CD4-positive, alpha-beta T cell (primary cell): ENCODE measurements at regions of chr4 and their contacts with region 1.

Region 1: DNA sequence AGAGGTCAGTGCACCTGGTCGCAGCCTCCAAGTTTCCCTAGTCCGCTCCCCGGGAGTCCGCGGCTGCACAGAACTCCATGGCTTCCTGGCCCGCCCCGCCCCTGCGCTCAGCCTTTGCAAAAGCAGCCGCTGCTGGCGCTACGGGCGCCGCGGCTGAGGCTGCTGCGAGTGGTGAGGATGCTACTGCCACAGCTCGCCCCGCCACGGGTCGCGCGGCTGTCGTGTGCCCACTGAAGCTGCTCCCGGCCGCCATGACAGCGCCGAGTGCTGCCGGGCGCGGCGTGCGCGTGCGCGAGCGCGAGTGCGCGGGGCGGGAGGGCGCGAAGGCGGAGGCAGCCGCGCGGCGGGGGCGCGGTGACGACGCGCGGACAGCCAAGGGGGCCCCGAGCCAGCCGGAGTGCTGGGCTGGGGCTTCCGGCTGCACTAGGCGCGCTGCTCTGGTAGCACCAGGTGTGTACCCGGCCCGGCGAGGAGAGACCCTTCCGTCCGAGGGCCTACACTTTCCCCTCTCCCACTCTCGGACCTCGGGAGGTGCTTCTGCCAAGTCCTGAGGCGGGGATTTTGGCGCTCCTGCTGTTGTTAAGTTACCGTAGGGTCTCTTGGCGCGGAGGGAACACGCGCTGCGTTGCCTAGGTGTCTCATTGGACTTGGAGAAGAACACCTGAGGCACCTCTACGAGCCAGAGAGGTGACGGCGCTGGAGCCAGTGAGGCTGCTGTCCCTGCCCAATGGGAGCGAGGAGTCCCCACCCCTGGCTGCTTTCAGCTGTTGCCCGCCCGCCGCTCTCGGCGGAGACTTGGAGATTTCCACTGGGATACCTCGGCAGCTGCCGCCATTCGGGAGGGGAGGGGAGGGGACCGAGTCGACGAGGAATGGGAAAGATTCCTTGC is 619 bp upstream of the LRBA start:
- DNase-seq: peak; percentile 65 to 95 (median 78)
- ATAC-seq: peak; percentile 72
- H3K4me3 ChIP-seq: peak overlapping the region; percentile 83
- H3K4me3 Mint-ChIP-seq: peak overlapping the region; percentile 100
- H3K27ac ChIP-seq: peak overlapping the region; percentile 91 to 97
- H3K27ac Mint-ChIP-seq: peak overlapping the region; percentile 98
- H3K4me1 ChIP-seq: peaks cover 28% of the 10 kb centered on the region
- H3K4me1 Mint-ChIP-seq: peaks cover 40% of the 10 kb centered on the region
- H3K27me3 ChIP-seq: no peaks in the 10 kb centered on the region
- H3K27me3 Mint-ChIP-seq: no peaks in the 10 kb centered on the region
- CTCF ChIP-seq: no peak

Region 2: GRCh38 chr4:151099229-151099975 is 83.7 kb after region 1 on chr4 and contains the start of gene RPS3A:
- CTCF ChIA-PET with region 1: interaction called, 13 read pairs
- POLR2A ChIA-PET with region 1: interaction called, 78 read pairs
- intact Hi-C with region 1: loop called (anchors 1 kb)
- DNase-seq: peak; percentile 96 to 99 (median 98)
- ATAC-seq: peak; percentile 83
- H3K4me3 ChIP-seq: peak within 1 kb of the TSS; percentile 74
- H3K4me3 Mint-ChIP-seq: peak within 1 kb of the TSS; percentile 87
- H3K27ac ChIP-seq: peak within 1 kb of the TSS; percentile 82 to 97
- H3K27ac Mint-ChIP-seq: peak within 1 kb of the TSS; percentile 88
- H3K4me1 ChIP-seq: peaks cover 26% of the 10 kb centered on the region
- H3K4me1 Mint-ChIP-seq: peaks cover 36% of the 10 kb centered on the region
- H3K27me3 ChIP-seq: no peaks in the 10 kb centered on the region
- H3K27me3 Mint-ChIP-seq: no peaks in the 10 kb centered on the region
- CTCF ChIP-seq: peak; percentile 91
- total RNA-seq, gene RPS3A: 3,925 to 4,071 TPM

Region 3: DNA sequence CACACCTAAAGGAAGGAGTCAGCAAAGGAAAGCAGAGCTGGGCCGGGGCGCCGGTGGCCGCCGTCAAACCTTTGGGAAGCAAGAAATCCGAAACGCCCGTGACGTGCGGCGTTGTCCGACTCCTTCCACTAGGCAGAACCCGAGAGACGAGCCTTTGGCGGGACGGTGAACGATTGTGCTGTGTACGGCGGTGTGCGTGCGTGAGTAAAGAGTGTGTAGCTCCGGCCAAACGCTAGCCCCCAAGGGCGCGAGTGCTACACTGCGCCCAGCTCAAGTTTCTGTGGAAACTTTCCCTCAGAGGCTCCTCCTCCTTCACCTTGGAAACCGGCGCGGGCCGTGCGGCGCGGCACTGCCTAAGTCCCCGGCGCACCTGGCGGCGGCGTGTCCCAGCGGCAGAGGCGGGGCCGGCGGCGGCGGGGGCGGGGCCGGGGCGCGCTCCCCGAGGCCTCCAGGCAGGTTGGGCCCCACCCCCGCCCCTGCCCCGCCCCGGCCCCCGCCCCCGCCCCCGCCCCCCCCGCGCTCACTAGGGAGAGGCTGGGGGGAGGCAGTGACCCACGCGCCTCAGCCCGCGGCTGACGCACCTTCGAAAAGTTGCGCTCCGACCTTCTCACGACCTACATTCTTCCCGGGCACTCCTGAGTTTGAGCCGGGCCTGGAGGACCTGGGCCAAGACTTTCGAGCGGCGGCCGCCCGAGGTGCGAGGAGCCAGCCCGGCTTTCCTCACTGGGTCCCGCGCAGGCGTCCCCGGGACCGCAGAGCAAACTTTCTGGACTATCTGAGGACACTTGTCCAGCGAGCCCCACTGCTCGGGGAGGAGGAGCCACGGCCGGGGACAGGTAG is 393.1 kb after region 1 on chr4 and contains the start of gene FHIP1A:
- CTCF ChIA-PET with region 1: no interaction called
- POLR2A ChIA-PET with region 1: no interaction called
- intact Hi-C with region 1: loop called in 1 of 2 experiments (anchors 5 kb)
- DNase-seq: peak; percentile 73 to 93 (median 85)
- ATAC-seq: peak; percentile 93
- H3K4me3 ChIP-seq: peak within 1 kb of the TSS; percentile 68
- H3K4me3 Mint-ChIP-seq: peak within 1 kb of the TSS; percentile 96
- H3K27ac ChIP-seq: no peak within 1 kb of the TSS
- H3K27ac Mint-ChIP-seq: peak within 1 kb of the TSS; percentile 83
- H3K4me1 ChIP-seq: peaks cover 27% of the 10 kb centered on the region
- H3K4me1 Mint-ChIP-seq: peaks cover 27% of the 10 kb centered on the region
- H3K27me3 ChIP-seq: peaks cover 0 to 4% of the 10 kb centered on the region in 2 experiments
- H3K27me3 Mint-ChIP-seq: peaks cover 4% of the 10 kb centered on the region
- CTCF ChIP-seq: no peak
- total RNA-seq, gene FHIP1A: 2.4 to 3.2 TPM

Region 4: DNA sequence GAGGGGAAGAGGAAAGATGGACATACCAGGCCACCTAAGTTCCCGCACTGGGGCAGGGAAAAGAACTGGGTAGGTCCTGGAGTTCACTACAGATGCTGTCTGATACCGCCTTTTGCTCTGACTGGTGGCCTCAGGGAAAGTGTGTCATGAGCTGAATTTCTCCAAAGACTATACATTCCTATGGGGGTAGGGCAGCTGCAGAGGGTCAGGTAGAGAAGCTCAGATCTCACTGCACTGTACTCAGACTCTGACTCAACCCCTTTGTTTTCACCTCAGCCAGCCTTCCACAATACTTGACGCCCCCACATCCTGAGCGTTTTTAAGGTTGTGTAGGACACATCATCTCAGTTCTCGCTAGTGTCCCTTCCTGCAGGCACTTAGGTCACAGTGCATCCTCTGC is 737.3 kb after region 1 on chr4:
- CTCF ChIA-PET with region 1: no interaction called
- POLR2A ChIA-PET with region 1: no interaction called
- intact Hi-C with region 1: loop called in 1 of 2 experiments (anchors 10 kb)
- DNase-seq: no peak
- ATAC-seq: no peak
- H3K4me3 ChIP-seq: no peak overlapping the region
- H3K4me3 Mint-ChIP-seq: no peak overlapping the region
- H3K27ac ChIP-seq: no peak overlapping the region
- H3K27ac Mint-ChIP-seq: no peak overlapping the region
- H3K4me1 ChIP-seq: no peaks in the 10 kb centered on the region
- H3K4me1 Mint-ChIP-seq: no peaks in the 10 kb centered on the region
- H3K27me3 ChIP-seq: no peaks in the 10 kb centered on the region
- H3K27me3 Mint-ChIP-seq: no peaks in the 10 kb centered on the region
- CTCF ChIP-seq: no peak

Region 5: GRCh38 chr4:152304220-152304619 is 1288.5 kb after region 1 on chr4:
- CTCF ChIA-PET with region 1: no interaction called
- POLR2A ChIA-PET with region 1: no interaction called
- intact Hi-C with region 1: no loop called
- DNase-seq: no peak
- ATAC-seq: no peak
- H3K4me3 ChIP-seq: no peak overlapping the region
- H3K4me3 Mint-ChIP-seq: no peak overlapping the region
- H3K27ac ChIP-seq: no peak overlapping the region
- H3K27ac Mint-ChIP-seq: no peak overlapping the region
- H3K4me1 ChIP-seq: no peaks in the 10 kb centered on the region
- H3K4me1 Mint-ChIP-seq: no peaks in the 10 kb centered on the region
- H3K27me3 ChIP-seq: no peaks in the 10 kb centered on the region
- H3K27me3 Mint-ChIP-seq: no peaks in the 10 kb centered on the region
- CTCF ChIP-seq: no peak